Caco-2 (cell line): ENCODE measurements at regions of chr21 and their contacts with region 1.

Region 1: GRCh38 chr21:43646550-43647260 is 12.6 kb downstream of the HSF2BP start:
- DNase-seq: peak; percentile 93
- H3K4me3 ChIP-seq: no peak overlapping the region
- H3K4me3 Mint-ChIP-seq: no peak overlapping the region
- H3K27ac Mint-ChIP-seq: peak overlapping the region; percentile 87
- H3K4me1 ChIP-seq: peaks cover 24% of the 10 kb centered on the region
- H3K4me1 Mint-ChIP-seq: peaks cover 23% of the 10 kb centered on the region
- H3K27me3 ChIP-seq: no peaks in the 10 kb centered on the region
- H3K27me3 Mint-ChIP-seq: no peaks in the 10 kb centered on the region
- CTCF ChIP-seq: peak; percentile 92 to 96

Region 2: DNA sequence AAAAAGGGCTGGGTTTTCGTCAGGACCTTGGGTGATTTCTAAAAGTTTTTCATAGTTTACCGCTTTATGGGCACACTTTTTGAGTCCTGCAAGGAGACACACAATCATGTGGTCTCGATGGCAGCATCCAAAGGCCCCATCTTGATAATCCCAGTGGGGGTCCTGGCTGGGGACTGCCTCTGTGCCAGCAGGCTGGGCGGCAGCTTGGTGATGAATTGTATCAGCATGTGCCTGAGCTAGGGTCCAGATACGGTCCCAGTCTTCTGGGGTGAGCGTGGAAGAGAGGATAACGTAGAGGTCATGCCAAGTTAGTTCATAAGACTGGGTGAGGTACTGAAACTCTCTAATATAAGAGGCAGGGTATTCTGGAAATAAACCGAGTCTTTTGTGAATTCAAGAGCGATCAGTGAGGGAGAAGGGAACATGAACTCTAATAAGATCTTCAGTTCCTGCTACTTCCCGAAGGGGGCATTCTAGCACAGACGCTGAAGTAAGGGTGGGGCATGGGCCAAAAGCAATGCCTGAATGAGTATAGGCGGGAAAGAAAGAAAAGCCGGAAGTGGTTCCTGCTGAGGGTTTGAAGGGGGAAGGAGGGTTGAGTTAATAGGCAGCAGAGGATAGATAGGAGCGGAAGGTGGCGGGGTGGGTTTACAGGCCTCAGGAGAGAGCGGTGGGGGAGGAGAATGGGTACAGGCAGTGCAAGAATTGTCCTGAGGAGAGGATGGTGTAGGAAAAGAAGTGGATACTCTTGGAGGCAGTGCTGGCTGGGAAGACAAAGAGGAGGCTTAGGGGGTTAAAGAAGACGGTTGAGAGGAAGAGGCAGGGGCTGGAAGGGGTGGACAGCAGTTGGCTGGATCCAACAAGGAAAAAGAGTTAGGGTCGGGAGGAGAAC is 722.9 kb before region 1 on chr21:
- CTCF ChIA-PET with region 1: no interaction called
- POLR2A ChIA-PET with region 1: no interaction called
- intact Hi-C with region 1: loop called (anchors 5 kb)
- DNase-seq: peak; percentile 87 to 92
- H3K4me3 ChIP-seq: peak overlapping the region; percentile 28
- H3K4me3 Mint-ChIP-seq: peak overlapping the region; percentile 83
- H3K27ac Mint-ChIP-seq: peak overlapping the region; percentile 88
- H3K4me1 ChIP-seq: peaks cover 24% of the 10 kb centered on the region
- H3K4me1 Mint-ChIP-seq: peaks cover 11% of the 10 kb centered on the region
- H3K27me3 ChIP-seq: no peaks in the 10 kb centered on the region
- H3K27me3 Mint-ChIP-seq: no peaks in the 10 kb centered on the region
- CTCF ChIP-seq: peak; percentile 75 to 80

Region 3: DNA sequence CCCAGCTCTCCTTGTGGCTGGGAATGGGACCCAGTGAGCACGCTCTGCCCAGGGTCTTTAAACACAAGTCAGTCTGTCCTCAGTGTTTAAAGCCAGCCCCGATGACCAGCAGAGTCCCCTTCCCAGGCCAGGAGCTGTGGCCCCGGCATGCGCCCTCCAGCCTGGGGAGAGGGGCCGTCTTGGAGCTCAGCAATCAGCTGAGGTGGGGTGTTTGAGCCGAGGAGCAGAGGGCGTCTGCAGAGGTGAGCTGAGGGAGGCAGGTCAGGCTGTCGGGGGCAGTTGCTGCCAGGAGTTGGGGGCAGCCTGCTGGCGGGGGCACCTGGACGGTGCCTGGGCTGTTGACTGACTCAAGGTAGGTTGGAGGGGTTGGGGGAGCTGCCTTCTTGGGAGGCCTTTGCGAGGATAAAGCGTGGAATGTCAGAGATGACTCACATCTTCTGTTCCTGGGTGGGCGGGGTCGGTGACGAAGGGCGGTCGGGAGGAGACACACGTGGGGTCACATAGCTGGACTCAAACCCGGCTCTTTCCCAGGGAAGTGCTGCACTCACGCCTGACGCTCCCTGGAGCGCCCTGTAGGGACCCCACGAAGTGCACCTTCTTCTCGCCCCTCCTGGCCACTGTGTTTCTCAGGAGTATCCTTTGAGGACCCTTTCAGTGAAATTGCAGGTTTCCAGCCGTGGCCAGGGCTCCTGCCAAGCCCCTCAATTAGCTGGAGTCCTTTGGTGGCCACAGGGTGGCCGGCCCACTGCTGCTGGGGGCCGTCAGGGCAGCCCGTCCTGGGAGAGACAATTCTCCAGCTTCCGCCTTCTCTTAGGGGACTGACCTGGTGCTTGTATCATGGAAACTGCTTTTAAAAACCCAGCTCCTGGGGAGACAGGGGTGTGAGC is 306.0 kb before region 1 on chr21:
- CTCF ChIA-PET with region 1: interaction called, 5 read pairs
- POLR2A ChIA-PET with region 1: interaction called, 3 read pairs
- intact Hi-C with region 1: loop called (anchors 5 kb)
- DNase-seq: peak; percentile 73 to 89
- H3K4me3 ChIP-seq: no peak overlapping the region
- H3K4me3 Mint-ChIP-seq: peak overlapping the region; percentile 33
- H3K27ac Mint-ChIP-seq: peak overlapping the region; percentile 88
- H3K4me1 ChIP-seq: peaks cover 60% of the 10 kb centered on the region
- H3K4me1 Mint-ChIP-seq: peaks cover 35% of the 10 kb centered on the region
- H3K27me3 ChIP-seq: no peaks in the 10 kb centered on the region
- H3K27me3 Mint-ChIP-seq: no peaks in the 10 kb centered on the region
- CTCF ChIP-seq: no peak

Region 4: DNA sequence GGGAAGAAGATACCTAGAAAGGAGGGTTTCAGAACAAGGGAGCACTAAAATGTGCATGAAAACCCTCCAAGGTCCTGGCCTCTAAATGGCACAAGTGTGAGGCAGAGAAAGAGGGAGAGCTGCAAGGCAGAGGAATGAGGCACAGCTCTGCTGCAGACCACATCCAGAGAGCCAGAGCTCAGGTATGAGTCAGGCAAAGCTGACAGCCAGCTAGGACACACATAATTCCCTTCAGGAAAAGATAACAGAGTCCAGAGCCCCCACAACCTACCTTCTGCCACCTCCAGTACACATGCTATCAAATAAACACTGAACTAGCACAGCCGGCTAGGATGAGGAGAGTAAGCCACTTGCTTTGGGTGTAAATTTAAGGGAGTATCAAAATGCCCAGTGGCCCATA is 49.7 kb before region 1 on chr21:
- CTCF ChIA-PET with region 1: no interaction called
- POLR2A ChIA-PET with region 1: no interaction called
- intact Hi-C with region 1: no loop called
- DNase-seq: no peak
- H3K4me3 ChIP-seq: no peak overlapping the region
- H3K4me3 Mint-ChIP-seq: no peak overlapping the region
- H3K27ac Mint-ChIP-seq: peak overlapping the region; percentile 65
- H3K4me1 ChIP-seq: peaks cover 37% of the 10 kb centered on the region
- H3K4me1 Mint-ChIP-seq: peaks cover 43% of the 10 kb centered on the region
- H3K27me3 ChIP-seq: no peaks in the 10 kb centered on the region
- H3K27me3 Mint-ChIP-seq: no peaks in the 10 kb centered on the region
- CTCF ChIP-seq: no peak

Region 5: DNA sequence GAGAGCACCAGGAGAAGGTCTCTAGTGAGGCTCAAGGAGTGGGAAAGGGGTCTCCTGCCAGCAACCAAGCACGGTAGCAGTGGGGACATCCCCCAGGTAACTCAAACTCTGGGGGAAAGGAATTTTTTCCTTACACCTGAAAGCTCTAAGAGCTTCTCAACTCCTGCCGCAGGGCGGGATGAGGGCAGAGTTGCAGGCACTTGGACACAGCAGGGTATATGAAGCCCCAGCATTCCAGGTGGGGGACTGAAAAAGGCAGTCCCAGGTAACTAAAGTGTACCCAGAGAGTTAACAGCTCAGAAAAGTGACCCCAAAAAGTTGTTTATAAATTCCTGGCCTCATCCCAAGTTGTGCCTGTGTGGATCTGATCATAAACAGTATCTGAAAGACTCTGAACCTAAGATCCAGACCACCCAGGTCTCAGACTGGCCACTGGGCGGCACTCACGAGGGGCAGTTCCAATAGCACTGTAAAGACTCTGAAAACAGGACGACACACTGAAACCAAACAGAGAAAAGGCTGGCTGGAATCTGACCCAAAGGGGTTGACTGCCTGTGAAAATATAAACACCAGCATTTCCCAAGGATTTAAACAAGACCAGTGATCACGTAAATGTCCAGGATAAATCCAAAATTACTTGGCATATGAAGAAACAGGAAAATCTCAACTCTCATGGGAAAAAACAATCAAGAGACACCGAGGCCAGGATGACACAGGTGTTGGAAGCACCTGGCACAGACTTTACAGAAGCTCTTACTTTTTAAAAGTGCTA is 34.9 kb before region 1 on chr21:
- CTCF ChIA-PET with region 1: interaction called, 11 read pairs
- POLR2A ChIA-PET with region 1: interaction called, 4 read pairs
- intact Hi-C with region 1: loop called (anchors 1 kb)
- DNase-seq: peak; percentile 77 to 82
- H3K4me3 ChIP-seq: no peak overlapping the region
- H3K4me3 Mint-ChIP-seq: peak overlapping the region; percentile 38
- H3K27ac Mint-ChIP-seq: peak overlapping the region; percentile 95
- H3K4me1 ChIP-seq: peaks cover 58% of the 10 kb centered on the region
- H3K4me1 Mint-ChIP-seq: peaks cover 22% of the 10 kb centered on the region
- H3K27me3 ChIP-seq: no peaks in the 10 kb centered on the region
- H3K27me3 Mint-ChIP-seq: no peaks in the 10 kb centered on the region
- CTCF ChIP-seq: peak; percentile 72 to 87

Region 6: DNA sequence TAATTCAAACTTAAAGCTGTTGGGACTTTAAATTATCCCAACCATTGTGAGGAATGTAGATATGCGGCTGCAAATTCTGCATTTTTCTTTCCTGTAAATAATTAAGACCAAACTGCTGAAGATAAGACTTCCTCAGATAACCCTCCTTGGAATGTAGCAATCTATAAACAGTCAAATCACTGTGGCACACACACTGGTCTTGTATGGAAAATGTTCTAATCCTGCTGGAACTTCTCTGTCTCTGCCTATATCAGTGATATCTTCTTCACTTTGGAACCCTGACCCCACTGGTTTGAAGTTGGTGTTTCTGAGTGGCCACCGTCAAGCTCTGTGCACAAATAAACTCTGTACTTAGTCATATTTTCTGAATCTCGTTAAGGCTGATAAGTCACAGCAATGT is 20.3 kb before region 1 on chr21:
- CTCF ChIA-PET with region 1: interaction called, 7 read pairs
- POLR2A ChIA-PET with region 1: no interaction called
- intact Hi-C with region 1: loop called (anchors 2 kb)
- DNase-seq: peak; percentile 44 to 62
- H3K4me3 ChIP-seq: no peak overlapping the region
- H3K4me3 Mint-ChIP-seq: peak overlapping the region; percentile 39
- H3K27ac Mint-ChIP-seq: peak overlapping the region; percentile 87
- H3K4me1 ChIP-seq: peaks cover 40% of the 10 kb centered on the region
- H3K4me1 Mint-ChIP-seq: peaks cover 30% of the 10 kb centered on the region
- H3K27me3 ChIP-seq: no peaks in the 10 kb centered on the region
- H3K27me3 Mint-ChIP-seq: no peaks in the 10 kb centered on the region
- CTCF ChIP-seq: no peak

Region 7: GRCh38 chr21:43893536-43894205 is 247.0 kb after region 1 on chr21:
- CTCF ChIA-PET with region 1: no interaction called
- POLR2A ChIA-PET with region 1: no interaction called
- intact Hi-C with region 1: no loop called
- DNase-seq: no peak
- H3K4me3 ChIP-seq: no peak overlapping the region
- H3K4me3 Mint-ChIP-seq: no peak overlapping the region
- H3K27ac Mint-ChIP-seq: no peak overlapping the region
- H3K4me1 ChIP-seq: peaks cover 4% of the 10 kb centered on the region
- H3K4me1 Mint-ChIP-seq: peaks cover 14% of the 10 kb centered on the region
- H3K27me3 ChIP-seq: no peaks in the 10 kb centered on the region
- H3K27me3 Mint-ChIP-seq: no peaks in the 10 kb centered on the region
- CTCF ChIP-seq: no peak

Region 8: GRCh38 chr21:44414291-44415072 is 767.8 kb after region 1 on chr21:
- CTCF ChIA-PET with region 1: no interaction called
- POLR2A ChIA-PET with region 1: no interaction called
- intact Hi-C with region 1: no loop called
- DNase-seq: peak in 1 of 2 experiments; percentile 21
- H3K4me3 ChIP-seq: no peak overlapping the region
- H3K4me3 Mint-ChIP-seq: no peak overlapping the region
- H3K27ac Mint-ChIP-seq: peak overlapping the region; percentile 70
- H3K4me1 ChIP-seq: no peaks in the 10 kb centered on the region
- H3K4me1 Mint-ChIP-seq: no peaks in the 10 kb centered on the region
- H3K27me3 ChIP-seq: no peaks in the 10 kb centered on the region
- H3K27me3 Mint-ChIP-seq: peaks cover 4% of the 10 kb centered on the region
- CTCF ChIP-seq: no peak